ENCODE measurements at regions of chr18 and their contacts with region 1.

Region 1: DNA sequence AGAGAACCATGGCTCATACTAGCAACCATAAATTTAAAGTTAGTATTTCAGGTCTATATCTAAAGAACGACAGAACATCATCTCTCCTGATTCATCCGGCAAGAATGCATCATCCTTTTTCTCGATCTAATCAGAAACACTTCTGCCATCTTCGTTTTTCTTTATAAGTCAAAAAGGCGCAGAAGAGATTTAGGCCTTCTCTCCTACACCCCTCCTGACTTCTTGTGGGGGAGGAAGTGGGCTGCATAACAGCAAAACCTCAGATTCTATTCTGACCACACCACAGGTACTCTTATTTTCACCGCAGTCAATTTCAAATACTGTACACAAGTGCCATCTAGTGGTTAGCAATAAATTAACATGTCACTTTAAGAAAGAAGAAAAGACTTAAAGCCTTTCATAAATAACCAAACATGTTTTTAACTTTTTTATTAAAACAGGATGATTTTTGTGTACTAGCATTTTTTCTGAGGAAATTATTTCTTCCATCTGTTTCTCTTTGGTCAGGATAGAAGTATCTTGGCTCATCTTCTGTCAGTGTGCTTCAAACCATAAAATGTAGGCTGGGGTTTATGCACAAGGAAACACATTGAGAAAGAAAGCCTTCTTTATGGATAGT is 48.4 kb upstream of the PIK3C3 start:
- DNase-seq: peak; percentile 35
- H3K4me3 ChIP-seq: no peak overlapping the region
- H3K27ac ChIP-seq: no peak overlapping the region
- H3K4me1 ChIP-seq: peaks cover 6% of the 10 kb centered on the region
- H3K27me3 ChIP-seq: no peaks in the 10 kb centered on the region
- CTCF ChIP-seq: peak; percentile 51 to 59

Region 2: DNA sequence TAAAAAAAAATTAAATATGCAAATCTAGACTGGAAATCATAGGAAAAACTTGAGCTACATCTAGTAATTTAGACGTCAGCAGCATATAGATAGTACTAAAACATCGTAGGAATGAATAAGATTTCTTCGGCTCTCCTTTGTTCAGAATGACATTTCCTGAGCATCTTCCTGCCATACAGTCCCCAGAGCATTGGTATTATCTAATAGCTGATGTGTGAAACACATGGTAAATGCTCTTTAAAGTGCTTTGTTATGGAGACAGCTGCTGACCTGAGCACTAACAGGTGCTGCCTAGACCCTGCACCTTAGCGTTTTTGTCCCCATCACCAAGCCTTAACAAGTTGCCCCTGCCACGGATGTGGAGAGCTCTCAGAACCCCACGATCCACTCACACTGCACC is 643.9 kb before region 1 on chr18:
- CTCF ChIA-PET with region 1: no interaction called
- dilution Hi-C with region 1: no loop called
- in situ Hi-C with region 1: no loop called
- intact Hi-C with region 1: no loop called
- DNase-seq: no peak
- H3K4me3 ChIP-seq: no peak overlapping the region
- H3K27ac ChIP-seq: no peak overlapping the region
- H3K4me1 ChIP-seq: no peaks in the 10 kb centered on the region
- H3K27me3 ChIP-seq: no peaks in the 10 kb centered on the region
- CTCF ChIP-seq: no peak

Region 3: DNA sequence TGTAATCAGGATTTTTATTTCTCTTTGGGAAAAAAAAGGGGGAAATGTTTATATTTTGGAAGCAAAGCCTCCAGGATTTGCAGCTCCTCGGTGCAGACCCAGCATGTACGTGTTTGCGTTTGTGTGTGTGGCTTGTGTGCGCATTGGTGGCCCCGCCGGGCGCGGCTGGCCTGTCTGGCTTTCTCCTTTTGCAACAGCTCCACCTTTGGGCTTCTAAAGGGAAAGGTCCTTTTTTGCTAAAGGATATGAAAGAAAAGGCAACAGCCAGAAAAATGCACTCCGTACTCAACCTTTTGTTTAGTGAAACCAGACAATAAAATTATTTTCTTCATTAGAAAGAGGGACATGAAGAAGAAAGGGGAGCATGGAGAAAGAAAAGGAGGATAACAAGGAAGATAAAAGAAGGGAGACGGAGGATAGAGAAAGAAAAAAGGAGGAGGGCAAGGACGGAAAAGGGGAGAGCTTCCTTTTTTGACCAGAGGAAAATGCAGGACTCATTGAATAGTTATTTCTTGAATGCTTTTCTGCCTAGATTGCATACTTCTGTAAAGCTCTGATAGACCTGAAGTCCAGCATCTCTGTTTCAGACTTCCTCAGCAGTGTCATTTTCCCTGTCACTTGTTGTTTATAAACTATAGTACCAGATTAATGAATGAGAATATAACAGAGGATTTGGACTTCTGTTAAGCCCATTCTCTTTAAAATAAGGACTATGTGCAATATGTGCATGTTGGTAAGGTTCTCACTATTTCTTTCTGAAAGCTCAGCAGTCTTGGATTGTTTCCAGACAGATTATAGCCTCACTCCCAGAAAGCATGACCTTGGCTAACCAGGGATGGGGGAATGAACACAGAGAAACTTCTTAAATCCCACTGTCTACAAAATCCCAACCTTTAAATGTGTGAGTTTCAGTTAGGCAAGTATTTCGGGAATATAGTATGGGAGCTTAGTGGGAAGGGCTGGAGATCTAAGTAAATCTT is 514.7 kb before region 1 on chr18:
- CTCF ChIA-PET with region 1: no interaction called
- dilution Hi-C with region 1: no loop called
- in situ Hi-C with region 1: loop called in 1 of 2 experiments (anchors 25 kb)
- intact Hi-C with region 1: loop called (anchors 10 kb)
- DNase-seq: peak; percentile 34
- H3K4me3 ChIP-seq: peak overlapping the region; percentile 34 to 61 (median 45)
- H3K27ac ChIP-seq: no peak overlapping the region
- H3K4me1 ChIP-seq: peaks cover 5% of the 10 kb centered on the region
- H3K27me3 ChIP-seq: no peaks in the 10 kb centered on the region
- CTCF ChIP-seq: peak; percentile 61 to 83

Region 4: GRCh38 chr18:41767960-41768359 is 138.7 kb before region 1 on chr18:
- CTCF ChIA-PET with region 1: interaction called, 3 read pairs
- dilution Hi-C with region 1: no loop called
- in situ Hi-C with region 1: loop called (anchors 5 kb)
- intact Hi-C with region 1: loop called (anchors 1 kb)
- DNase-seq: peak; percentile 52
- H3K4me3 ChIP-seq: no peak overlapping the region
- H3K27ac ChIP-seq: no peak overlapping the region
- H3K4me1 ChIP-seq: peaks cover 2% of the 10 kb centered on the region
- H3K27me3 ChIP-seq: no peaks in the 10 kb centered on the region
- CTCF ChIP-seq: peak; percentile 38 to 69

Measured in mammary epithelial cell (primary cell).